ENCODE measurements at regions of chr19 and their contacts with region 1.

Region 1: DNA sequence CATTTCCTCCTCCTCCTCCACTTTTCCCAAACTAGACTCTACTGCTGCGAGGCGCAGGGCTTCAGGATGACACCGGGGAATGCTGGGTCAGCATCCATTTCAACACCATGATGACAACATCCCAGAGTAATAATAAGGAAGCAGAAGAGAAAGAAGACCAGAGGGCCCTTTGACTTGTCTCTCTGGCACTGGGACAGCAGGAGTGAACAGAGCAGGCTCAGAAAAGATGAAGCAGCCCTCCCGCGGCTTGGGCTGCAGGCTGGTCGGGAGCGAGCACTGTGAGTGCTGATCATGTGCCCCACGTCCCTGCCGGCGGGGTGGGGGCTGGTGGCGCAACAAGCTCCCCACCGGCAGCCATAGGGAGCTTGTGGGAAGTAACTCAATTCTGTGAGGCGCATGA is 30.5 kb downstream of the RANBP3 start:
- DNase-seq: peak; percentile 48 to 83 (median 76)
- H3K4me3 ChIP-seq: peak overlapping the region in 52 of 59 donors; percentile 2 to 62 (median 34)
- H3K27ac ChIP-seq: peak overlapping the region; percentile 29 to 94 (median 83)
- H3K27me3 ChIP-seq: no peaks in the 10 kb centered on the region
- CTCF ChIP-seq: peak in 6 of 56 donors; percentile 0 to 14 (median 8)

Region 2: GRCh38 chr19:5913739-5914357 is 33.6 kb before region 1 on chr19 and contains the start of gene CAPS:
- intact Hi-C with region 1: loop called in 1 of 2 experiments (anchors 5 kb)
- DNase-seq: peak in 1 of 10 donors; percentile 49
- H3K4me3 ChIP-seq: no peak within 1 kb of the TSS
- H3K27ac ChIP-seq: peak within 1 kb of the TSS in 29 of 59 donors; percentile 3 to 80 (median 52)
- H3K27me3 ChIP-seq: no peaks in the 10 kb centered on the region
- CTCF ChIP-seq: no peak
- total RNA-seq, gene CAPS: 7.5 to 55.0 (median 19.2) TPM

Region 3: GRCh38 chr19:5961969-5962945 is 14.8 kb after region 1 on chr19:
- intact Hi-C with region 1: no loop called
- DNase-seq: no peak
- H3K4me3 ChIP-seq: peak overlapping the region in 36 of 59 donors; percentile 3 to 48 (median 20)
- H3K27ac ChIP-seq: peak overlapping the region in 58 of 59 donors; percentile 15 to 91 (median 74)
- H3K27me3 ChIP-seq: no peaks in the 10 kb centered on the region
- CTCF ChIP-seq: peak in 1 of 56 donors; percentile 14

Region 4: DNA sequence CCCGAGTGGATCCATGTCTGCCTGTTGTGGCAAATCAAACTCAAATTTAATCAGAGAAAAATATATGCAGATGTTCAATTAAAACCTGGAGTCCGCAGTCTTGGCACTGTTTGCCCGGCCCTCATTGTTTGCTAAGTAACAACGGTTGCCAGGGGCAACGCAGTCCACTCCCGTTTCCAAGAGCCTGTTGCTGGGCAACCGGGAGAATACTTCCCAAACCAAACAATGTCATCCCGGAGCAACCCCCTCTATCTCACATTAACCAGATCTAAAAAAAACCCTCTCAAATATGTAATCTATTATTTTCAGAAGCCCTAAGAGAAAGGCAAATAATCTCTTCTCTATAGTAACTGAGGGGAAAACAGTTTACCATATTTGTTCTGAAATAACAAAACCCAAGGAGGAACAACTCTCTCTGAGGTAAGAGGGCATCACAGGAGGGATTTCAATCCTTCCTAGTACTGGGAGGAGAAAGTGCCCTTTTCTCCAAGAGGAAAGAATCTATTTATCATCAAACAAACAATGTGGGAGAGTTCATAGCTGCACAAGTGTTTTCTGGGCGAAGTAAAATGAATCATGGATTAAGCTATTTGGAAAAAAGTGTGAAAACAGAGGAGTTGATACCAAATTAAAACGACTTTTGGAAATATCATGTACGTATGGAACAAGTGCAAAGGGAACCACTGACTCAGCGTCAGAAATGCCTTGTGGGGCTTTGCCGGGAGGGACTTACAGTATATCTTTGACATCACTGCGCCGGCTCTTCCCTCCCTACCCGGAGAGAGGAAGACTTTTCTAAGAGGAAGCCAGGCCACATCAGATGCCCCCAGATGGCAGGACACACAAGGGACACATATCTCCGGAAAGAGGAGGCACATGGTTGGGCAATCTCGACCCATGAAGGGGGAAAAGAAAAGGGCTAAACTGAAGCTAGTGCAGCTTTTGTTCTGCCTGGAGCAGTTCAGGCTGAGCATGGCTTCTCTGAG is 119.5 kb after region 1 on chr19:
- intact Hi-C with region 1: no loop called
- DNase-seq: peak; percentile 39 to 87 (median 79)
- H3K4me3 ChIP-seq: peak overlapping the region in 18 of 59 donors; percentile 5 to 36 (median 22)
- H3K27ac ChIP-seq: peak overlapping the region in 56 of 59 donors; percentile 21 to 89 (median 68)
- H3K27me3 ChIP-seq: peaks cover 0 to 3% (median 0%) of the 10 kb centered on the region in 45 donors
- CTCF ChIP-seq: no peak

Measured in dorsolateral prefrontal cortex (tissue), 120 donors.